Psoas muscle (tissue), 8 donors: ENCODE measurements at regions of chr2 and their contacts with region 1.

Region 1: GRCh38 chr2:178377046-178377445 is 73.9 kb downstream of the PRKRA start:
- DNase-seq: no peak
- ATAC-seq: peak; percentile 12 to 29 (median 20)
- H3K4me3 ChIP-seq: no peak overlapping the region
- H3K27ac ChIP-seq: no peak overlapping the region
- H3K4me1 ChIP-seq: no peaks in the 10 kb centered on the region
- H3K27me3 ChIP-seq: no peaks in the 10 kb centered on the region
- CTCF ChIP-seq: no peak

Region 2: GRCh38 chr2:177998006-177998405 is 379.0 kb before region 1 on chr2:
- intact Hi-C with region 1: no loop called
- DNase-seq: no peak
- ATAC-seq: no peak
- H3K4me3 ChIP-seq: no peak overlapping the region
- H3K27ac ChIP-seq: no peak overlapping the region
- H3K4me1 ChIP-seq: no peaks in the 10 kb centered on the region
- H3K27me3 ChIP-seq: no peaks in the 10 kb centered on the region
- CTCF ChIP-seq: no peak

Region 3: GRCh38 chr2:178344121-178344520 is 32.9 kb before region 1 on chr2:
- intact Hi-C with region 1: loop called in 1 of 2 experiments (anchors 5 kb)
- DNase-seq: no peak
- ATAC-seq: no peak
- H3K4me3 ChIP-seq: no peak overlapping the region
- H3K27ac ChIP-seq: no peak overlapping the region
- H3K4me1 ChIP-seq: no peaks in the 10 kb centered on the region
- H3K27me3 ChIP-seq: no peaks in the 10 kb centered on the region
- CTCF ChIP-seq: no peak